ENCODE measurements at regions of chr1 and their contacts with region 1.

Region 1: DNA sequence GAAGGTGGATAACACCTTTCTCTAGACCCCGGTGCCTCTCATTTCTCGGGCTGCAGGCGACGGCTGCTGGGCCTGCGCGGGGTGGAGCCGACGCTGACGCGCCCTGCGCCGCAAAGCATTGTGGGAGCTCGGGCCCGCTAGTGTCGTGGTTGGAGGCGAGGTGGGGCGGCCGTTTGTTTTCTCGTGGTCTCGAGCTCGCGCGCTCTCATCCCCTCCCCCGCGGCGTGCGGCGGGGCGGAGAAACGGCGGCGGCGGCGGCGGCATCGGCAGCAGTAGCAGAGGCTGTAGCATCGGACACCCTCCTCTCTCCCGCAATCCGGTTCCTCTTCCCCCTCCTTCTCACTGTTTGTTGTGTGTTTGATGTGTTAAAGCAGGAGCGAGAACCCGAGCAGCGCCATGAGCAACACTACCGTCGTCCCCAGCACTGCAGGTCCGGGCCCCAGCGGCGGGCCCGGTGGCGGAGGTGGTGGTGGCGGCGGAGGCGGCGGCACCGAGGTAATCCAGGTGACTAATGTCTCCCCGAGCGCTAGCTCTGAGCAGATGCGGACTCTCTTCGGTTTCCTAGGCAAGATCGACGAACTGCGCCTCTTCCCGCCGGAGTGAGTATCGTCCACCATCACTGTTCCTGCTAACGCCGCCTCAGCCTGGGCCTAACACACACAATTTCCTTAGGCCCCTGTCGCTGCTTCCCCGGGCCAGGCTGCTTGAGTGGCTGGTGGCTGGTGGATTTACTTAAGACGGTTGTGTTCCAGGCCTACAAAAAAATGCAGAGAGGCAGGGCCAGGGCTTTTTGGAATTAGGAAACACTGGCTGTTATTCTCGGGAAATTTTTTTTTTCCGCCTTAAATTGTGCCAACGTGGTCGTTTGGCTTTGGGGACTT is at the start of gene SRSF11:
- DNase-seq: peak; percentile 96
- H3K4me3 Mint-ChIP-seq: peak within 1 kb of the TSS; percentile 86
- H3K27ac Mint-ChIP-seq: peak within 1 kb of the TSS; percentile 91
- H3K4me1 Mint-ChIP-seq: peaks cover 49% of the 10 kb centered on the region
- H3K27me3 Mint-ChIP-seq: no peaks in the 10 kb centered on the region
- total RNA-seq, gene SRSF11: 177 to 178 TPM

Region 2: DNA sequence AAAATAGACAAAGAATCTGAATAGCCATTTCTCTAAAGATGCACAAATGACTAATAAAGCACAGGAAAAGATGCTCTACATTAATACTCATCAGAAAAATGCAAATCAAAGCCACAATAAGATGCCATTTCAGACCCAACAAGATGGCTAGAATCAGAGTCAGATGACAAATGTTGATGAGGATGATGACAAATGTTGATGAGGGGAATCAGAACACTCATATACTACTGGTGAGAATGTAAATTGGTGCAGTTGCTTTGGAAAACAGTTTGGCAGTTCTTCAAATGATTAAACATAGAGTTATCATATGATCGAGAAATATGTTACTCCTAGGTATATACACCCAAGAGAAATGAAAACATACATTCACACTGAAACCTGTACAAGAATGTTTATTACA is 50.0 kb before region 1 on chr1:
- CTCF ChIA-PET with region 1: no interaction called
- POLR2A ChIA-PET with region 1: no interaction called
- DNase-seq: no peak
- H3K4me3 Mint-ChIP-seq: no peak overlapping the region
- H3K27ac Mint-ChIP-seq: no peak overlapping the region
- H3K4me1 Mint-ChIP-seq: peaks cover 13% of the 10 kb centered on the region
- H3K27me3 Mint-ChIP-seq: no peaks in the 10 kb centered on the region

Region 3: GRCh38 chr1:70354332-70355110 is 133.0 kb after region 1 on chr1 and contains the start of gene ANKRD13C:
- CTCF ChIA-PET with region 1: interaction called, 3 read pairs
- POLR2A ChIA-PET with region 1: interaction called, 27 read pairs
- DNase-seq: peak; percentile 94
- H3K4me3 Mint-ChIP-seq: peak within 1 kb of the TSS; percentile 83
- H3K27ac Mint-ChIP-seq: peak within 1 kb of the TSS; percentile 91
- H3K4me1 Mint-ChIP-seq: peaks cover 42% of the 10 kb centered on the region
- H3K27me3 Mint-ChIP-seq: no peaks in the 10 kb centered on the region
- total RNA-seq, gene ANKRD13C: 24.1 to 24.9 TPM

Measured in activated CD4-positive, alpha-beta memory T cell treated with anti-CD3 and anti-CD28 coated beads, Interleukin-2, amount 10 ng/mL, durations not matched to agents 7 days and 5 days (primary cell).